ENCODE measurements at regions of chr4 and their contacts with region 1.

Region 1: GRCh38 chr4:177441803-177442622 is at the start of gene AGA:
- DNase-seq: peak; percentile 83
- H3K4me3 ChIP-seq: peak within 1 kb of the TSS; percentile 83
- H3K27ac ChIP-seq: peak within 1 kb of the TSS; percentile 92
- H3K27me3 ChIP-seq: no peaks in the 10 kb centered on the region
- CTCF ChIP-seq: 0 out of 2 replicates have a peak, but pooled peaks have one; percentile 5
- polyA plus RNA-seq, gene AGA: 58.2 and 61.8 TPM in 2 replicates

Region 2: GRCh38 chr4:177484613-177485021 is 42.6 kb after region 1 on chr4:
- CTCF ChIA-PET with region 1: no interaction called
- POLR2A ChIA-PET with region 1: interaction called, 13 read pairs
- DNase-seq: peak; percentile 90
- H3K4me3 ChIP-seq: no peak overlapping the region
- H3K27ac ChIP-seq: peak overlapping the region; percentile 94
- H3K27me3 ChIP-seq: no peaks in the 10 kb centered on the region
- CTCF ChIP-seq: no peak

Measured in AG04450 (cell line).